GM13976 (cell line): ENCODE measurements at regions of chr2 and their contacts with region 1.

Region 1: GRCh38 chr2:8681786-8682692 is at the start of gene ID2:
- DNase-seq: peak; percentile 98
- CTCF ChIP-seq: no peak

Region 2: GRCh38 chr2:7427293-7428060 is 1254.6 kb before region 1 on chr2:
- in situ Hi-C with region 1: loop called (anchors 10 kb)
- DNase-seq: peak; percentile 57
- CTCF ChIP-seq: peak; percentile 49

Region 3: GRCh38 chr2:8525582-8526402 is 156.2 kb before region 1 on chr2:
- in situ Hi-C with region 1: loop called (anchors 10 kb)
- DNase-seq: peak; percentile 87
- CTCF ChIP-seq: peak; percentile 48

Region 4: GRCh38 chr2:8796878-8797550 is 115.0 kb after region 1 on chr2:
- in situ Hi-C with region 1: no loop called
- DNase-seq: peak; percentile 24
- CTCF ChIP-seq: no peak